Activated CD8-positive, alpha-beta memory T cell treated with anti-CD3 and anti-CD28 coated beads, Interleukin-2, amount 10 ng/mL, durations not matched to agents 7 days and 5 days (primary cell): ENCODE measurements at regions of chr7 and their contacts with region 1.

Region 1: GRCh38 chr7:135672560-135673359 is 10.4 kb downstream of the STMP1 start:
- DNase-seq: no peak
- ATAC-seq: no peak
- H3K4me3 Mint-ChIP-seq: no peak overlapping the region
- H3K27ac Mint-ChIP-seq: no peak overlapping the region
- H3K4me1 Mint-ChIP-seq: peaks cover 2% of the 10 kb centered on the region
- H3K27me3 Mint-ChIP-seq: no peaks in the 10 kb centered on the region

Region 2: GRCh38 chr7:135662373-135663114 is 10.2 kb before region 1 on chr7 and contains the start of gene STMP1:
- CTCF ChIA-PET with region 1: interaction called, 42 read pairs
- DNase-seq: peak; percentile 96
- ATAC-seq: peak; percentile 98
- H3K4me3 Mint-ChIP-seq: peak within 1 kb of the TSS; percentile 90
- H3K27ac Mint-ChIP-seq: peak within 1 kb of the TSS; percentile 86
- H3K4me1 Mint-ChIP-seq: peaks cover 33% of the 10 kb centered on the region
- H3K27me3 Mint-ChIP-seq: no peaks in the 10 kb centered on the region
- total RNA-seq, gene STMP1: 14.4 to 17.5 TPM

Region 3: GRCh38 chr7:135710417-135711138 is 37.8 kb after region 1 on chr7:
- CTCF ChIA-PET with region 1: interaction called, 40 read pairs
- DNase-seq: no peak
- ATAC-seq: no peak
- H3K4me3 Mint-ChIP-seq: no peak overlapping the region
- H3K27ac Mint-ChIP-seq: no peak overlapping the region
- H3K4me1 Mint-ChIP-seq: peaks cover 5% of the 10 kb centered on the region
- H3K27me3 Mint-ChIP-seq: no peaks in the 10 kb centered on the region